MCF 10A (cell line): ENCODE measurements at regions of chr1 and their contacts with region 1.

Region 1: DNA sequence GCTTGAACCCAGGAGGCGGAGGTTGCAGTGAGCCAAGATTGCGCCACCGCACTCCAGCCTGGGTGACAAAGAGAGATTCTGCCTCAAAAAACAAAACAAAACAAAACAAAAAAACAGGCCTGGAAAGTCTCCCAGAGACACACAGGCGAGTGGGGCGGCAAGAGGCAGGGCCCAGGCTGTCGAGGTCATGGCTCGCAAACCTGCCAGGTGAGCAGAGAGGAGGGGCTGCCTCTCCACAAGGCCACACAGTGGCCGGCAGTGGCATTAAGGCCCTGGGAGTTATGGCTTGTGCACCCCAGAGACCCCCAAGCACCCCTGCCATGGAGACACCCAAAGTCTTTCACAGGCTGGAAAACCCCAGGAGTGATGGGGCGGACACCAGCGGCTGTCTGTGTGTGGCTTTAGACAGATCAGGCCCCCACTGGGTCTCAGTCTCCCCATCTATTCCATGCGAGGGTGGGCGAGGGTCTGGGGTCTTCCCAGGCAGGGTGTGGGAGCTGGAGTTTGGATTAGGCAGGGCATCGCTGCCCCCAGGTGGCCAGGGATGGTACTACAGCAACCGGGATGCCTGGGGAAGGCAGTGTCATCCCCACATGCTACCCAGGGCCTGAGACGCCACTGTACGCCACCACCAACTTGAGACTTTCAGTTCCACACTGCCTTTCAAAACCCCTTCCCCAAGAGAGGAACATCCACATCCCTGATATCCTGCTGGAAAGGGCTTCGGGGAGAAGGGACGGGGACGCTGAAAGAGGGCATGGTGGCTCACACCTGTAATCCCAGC is 7.3 kb upstream of the CTRC start:
- DNase-seq: peak; percentile 59
- H3K4me3 Mint-ChIP-seq: no peak overlapping the region
- H3K27ac Mint-ChIP-seq: no peak overlapping the region
- H3K4me1 Mint-ChIP-seq: peaks cover 14% of the 10 kb centered on the region
- H3K27me3 Mint-ChIP-seq: no peaks in the 10 kb centered on the region
- CTCF ChIP-seq: peak; percentile 98

Region 2: DNA sequence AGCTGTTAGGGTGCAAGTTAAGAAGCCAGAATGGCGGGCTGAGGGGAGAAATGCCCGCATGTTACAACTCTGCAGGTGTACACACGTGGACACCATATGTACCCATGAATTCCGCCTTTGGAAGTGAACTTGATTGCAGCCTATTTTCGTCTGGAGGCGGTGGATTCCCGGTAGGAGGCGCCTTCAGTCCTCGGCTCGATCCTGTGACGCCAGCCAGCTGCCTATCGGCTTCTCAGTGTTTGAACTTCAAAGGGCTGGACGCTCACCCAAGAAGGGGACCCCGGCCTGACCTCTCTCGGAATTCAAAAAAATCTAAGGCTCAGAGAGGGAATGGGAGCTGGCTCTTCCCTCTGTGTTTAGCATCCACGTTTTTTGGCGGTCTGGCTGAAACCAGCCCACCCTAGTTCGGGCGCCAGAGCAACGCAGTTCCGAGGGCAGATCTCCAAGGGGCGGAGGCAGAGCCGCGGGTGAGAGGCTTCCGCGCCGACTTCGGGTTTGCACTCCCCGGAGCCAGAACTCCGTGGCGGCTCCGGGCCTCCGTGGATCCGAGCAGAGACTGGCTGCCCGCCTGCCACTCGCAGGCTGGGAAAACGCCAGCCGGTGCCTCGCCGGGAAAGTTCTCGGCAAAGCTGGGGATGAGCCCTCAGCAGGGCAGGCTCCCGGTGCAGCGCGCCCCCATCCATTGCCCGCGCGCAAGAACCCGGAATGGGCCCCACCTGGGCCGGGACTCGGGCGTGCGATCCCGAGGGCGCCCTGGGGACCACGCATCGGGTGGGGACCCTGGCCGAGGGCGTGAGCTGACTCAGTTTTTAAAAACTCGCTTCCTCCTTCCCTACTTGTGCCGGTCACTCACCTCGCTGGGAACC is 278.4 kb before region 1 on chr1:
- CTCF ChIA-PET with region 1: interaction called, 3 read pairs
- POLR2A ChIA-PET with region 1: no interaction called
- intact Hi-C with region 1: loop called (anchors 5 kb)
- DNase-seq: peak; percentile 92
- H3K4me3 Mint-ChIP-seq: peak overlapping the region; percentile 85
- H3K27ac Mint-ChIP-seq: peak overlapping the region; percentile 42
- H3K4me1 Mint-ChIP-seq: peaks cover 6% of the 10 kb centered on the region
- H3K27me3 Mint-ChIP-seq: no peaks in the 10 kb centered on the region
- CTCF ChIP-seq: peak; percentile 45

Region 3: GRCh38 chr1:15323351-15323988 is 107.5 kb before region 1 on chr1:
- CTCF ChIA-PET with region 1: interaction called, 165 read pairs
- POLR2A ChIA-PET with region 1: interaction called, 31 read pairs
- intact Hi-C with region 1: no loop called
- DNase-seq: peak; percentile 83
- H3K4me3 Mint-ChIP-seq: no peak overlapping the region
- H3K27ac Mint-ChIP-seq: no peak overlapping the region
- H3K4me1 Mint-ChIP-seq: no peaks in the 10 kb centered on the region
- H3K27me3 Mint-ChIP-seq: no peaks in the 10 kb centered on the region
- CTCF ChIP-seq: peak; percentile 87

Region 4: DNA sequence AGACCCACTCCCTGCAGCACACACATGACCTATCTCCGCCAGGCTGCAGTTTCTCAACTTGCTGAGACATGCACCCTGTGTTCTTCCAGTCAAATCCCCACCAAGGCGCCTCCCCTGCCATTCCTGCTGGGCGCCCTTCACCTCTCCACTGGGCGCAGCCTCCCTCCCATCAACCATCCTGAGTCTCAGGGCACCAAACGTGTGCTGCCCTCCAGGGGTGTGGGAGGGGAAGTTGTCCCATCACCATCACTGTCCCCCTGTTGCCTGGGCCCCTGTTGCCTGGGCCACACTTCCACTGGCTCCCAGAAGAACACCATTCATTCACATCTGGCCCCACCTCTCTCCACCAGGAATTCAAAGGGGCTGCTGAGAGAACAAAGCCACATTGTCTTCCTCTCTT is 66.2 kb before region 1 on chr1:
- CTCF ChIA-PET with region 1: no interaction called
- POLR2A ChIA-PET with region 1: no interaction called
- intact Hi-C with region 1: no loop called
- DNase-seq: peak; percentile 53
- H3K4me3 Mint-ChIP-seq: no peak overlapping the region
- H3K27ac Mint-ChIP-seq: no peak overlapping the region
- H3K4me1 Mint-ChIP-seq: no peaks in the 10 kb centered on the region
- H3K27me3 Mint-ChIP-seq: no peaks in the 10 kb centered on the region
- CTCF ChIP-seq: no peak

Region 5: GRCh38 chr1:15417365-15417934 is 13.5 kb before region 1 on chr1:
- CTCF ChIA-PET with region 1: interaction called, 28 read pairs
- POLR2A ChIA-PET with region 1: interaction called, 4 read pairs
- intact Hi-C with region 1: no loop called
- DNase-seq: peak; percentile 91
- H3K4me3 Mint-ChIP-seq: peak overlapping the region; percentile 47
- H3K27ac Mint-ChIP-seq: peak overlapping the region; percentile 79
- H3K4me1 Mint-ChIP-seq: peaks cover 34% of the 10 kb centered on the region
- H3K27me3 Mint-ChIP-seq: no peaks in the 10 kb centered on the region
- CTCF ChIP-seq: no peak

Region 6: DNA sequence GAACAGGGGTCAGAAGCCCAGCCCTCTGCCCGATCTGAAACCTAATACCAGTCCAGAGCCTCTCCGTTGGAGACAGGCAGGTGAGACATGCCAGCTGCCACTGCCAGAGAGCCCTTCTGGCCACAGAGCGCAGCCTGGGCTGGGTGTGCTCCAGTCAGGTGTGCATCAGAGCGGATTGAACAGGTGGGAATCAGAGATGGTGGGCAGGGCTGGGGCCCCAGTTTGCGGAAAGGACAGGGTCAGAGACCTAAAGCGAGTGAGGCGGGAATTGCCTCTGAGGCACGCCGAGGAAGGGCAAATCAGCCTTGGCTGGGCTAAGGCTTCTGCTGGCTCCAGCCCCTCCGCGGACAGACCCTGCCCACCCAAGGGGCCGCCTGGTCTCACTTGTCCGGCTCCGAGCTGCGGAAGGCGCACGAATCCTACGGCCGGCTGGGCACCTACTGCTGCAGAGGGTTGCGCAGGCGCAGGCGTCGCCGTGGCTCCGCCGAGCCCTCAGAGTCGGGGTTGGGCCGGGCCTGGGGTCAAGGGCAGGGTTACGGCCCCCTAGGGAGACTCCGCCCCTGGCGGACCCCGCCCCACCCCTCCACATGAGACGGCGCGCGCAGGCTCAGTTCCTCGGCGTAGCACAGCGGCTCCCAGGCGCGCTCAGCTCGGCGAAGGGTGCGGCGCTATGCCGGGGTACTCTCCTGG is 795.7 kb after region 1 on chr1:
- CTCF ChIA-PET with region 1: no interaction called
- POLR2A ChIA-PET with region 1: no interaction called
- intact Hi-C with region 1: no loop called
- DNase-seq: no peak
- H3K4me3 Mint-ChIP-seq: no peak overlapping the region
- H3K27ac Mint-ChIP-seq: no peak overlapping the region
- H3K4me1 Mint-ChIP-seq: no peaks in the 10 kb centered on the region
- H3K27me3 Mint-ChIP-seq: no peaks in the 10 kb centered on the region
- CTCF ChIP-seq: no peak